A673 (cell line): ENCODE measurements at regions of chr6 and their contacts with region 1.

Region 1: DNA sequence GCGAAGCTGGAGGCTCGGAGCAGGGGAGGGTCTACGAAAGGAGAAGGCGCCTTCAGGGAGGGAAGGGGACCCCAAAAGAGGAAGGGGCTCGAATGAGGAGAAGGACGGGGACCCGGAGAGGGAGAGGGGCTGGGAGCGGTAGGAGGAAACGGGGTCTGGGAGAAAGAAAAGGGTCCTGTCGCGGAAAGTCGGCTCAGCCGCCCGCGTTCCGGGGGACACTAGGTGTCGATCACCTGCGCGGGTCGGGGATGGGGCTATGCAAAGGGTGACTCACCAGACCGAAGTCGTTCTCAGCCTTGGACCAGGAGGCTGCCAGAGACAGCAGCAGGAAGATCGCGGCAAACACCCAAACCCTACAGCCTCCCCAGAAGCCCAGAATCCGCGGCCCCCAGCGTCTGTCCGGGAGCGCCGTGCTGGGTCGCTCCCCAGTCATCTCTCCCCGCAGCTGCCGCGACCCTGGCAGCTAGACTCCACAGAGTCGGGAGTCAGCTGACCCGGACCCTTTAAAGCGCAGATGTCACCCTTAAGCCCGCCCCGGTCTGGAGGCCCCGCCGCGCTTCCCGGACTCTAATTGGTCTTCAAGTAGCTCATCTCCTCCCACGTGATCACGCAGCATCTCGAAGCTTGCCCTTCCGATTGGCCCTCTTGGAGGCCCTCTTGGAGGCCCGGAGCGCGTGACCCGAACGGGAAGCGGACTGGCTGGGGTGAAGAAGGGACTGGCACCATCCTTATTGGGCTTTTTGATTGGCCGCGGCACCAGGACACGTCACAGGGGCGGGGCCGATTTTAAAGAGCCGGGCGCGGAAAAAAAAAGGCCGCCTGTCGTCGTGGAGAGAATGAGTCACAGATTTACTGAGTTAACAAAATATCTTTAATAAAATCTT is at the start of gene NEU1:
- DNase-seq: peak; percentile 100
- H3K4me3 ChIP-seq: peak within 1 kb of the TSS; percentile 72
- H3K27ac ChIP-seq: peak within 1 kb of the TSS; percentile 81
- H3K4me1 ChIP-seq: peaks cover 6% of the 10 kb centered on the region
- H3K27me3 ChIP-seq: no peaks in the 10 kb centered on the region
- CTCF ChIP-seq: no peak
- total RNA-seq, gene NEU1: 28.5 and 34.3 TPM in 2 replicates

Region 2: DNA sequence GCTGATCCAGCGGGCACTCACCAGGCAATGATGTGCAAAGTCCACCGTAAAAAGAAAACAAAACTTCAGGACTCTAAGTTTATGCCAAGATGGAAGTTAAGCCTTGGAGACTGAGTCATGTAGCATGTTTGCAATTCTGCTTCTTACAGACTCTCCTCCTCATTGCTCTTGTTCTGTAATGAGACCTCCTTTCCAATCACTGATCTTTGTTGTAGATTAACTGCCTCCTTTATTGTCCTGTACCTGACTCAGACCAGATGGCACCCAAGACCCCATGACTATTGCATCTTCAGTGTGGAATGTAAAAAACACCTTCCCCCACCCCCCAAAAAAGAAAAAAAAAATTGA is 11.1 kb before region 1 on chr6:
- CTCF ChIA-PET with region 1: no interaction called
- POLR2A ChIA-PET with region 1: interaction called, 13 read pairs
- intact Hi-C with region 1: no loop called
- DNase-seq: no peak
- H3K4me3 ChIP-seq: no peak overlapping the region
- H3K27ac ChIP-seq: no peak overlapping the region
- H3K4me1 ChIP-seq: no peaks in the 10 kb centered on the region
- H3K27me3 ChIP-seq: no peaks in the 10 kb centered on the region
- CTCF ChIP-seq: no peak

Region 3: GRCh38 chr6:31897612-31898382 is 35.2 kb after region 1 on chr6 and contains the start of gene EHMT2:
- CTCF ChIA-PET with region 1: no interaction called
- POLR2A ChIA-PET with region 1: interaction called, 5 read pairs
- intact Hi-C with region 1: loop called (anchors 2 kb)
- DNase-seq: peak; percentile 94
- H3K4me3 ChIP-seq: peak within 1 kb of the TSS; percentile 83
- H3K27ac ChIP-seq: peak within 1 kb of the TSS; percentile 82
- H3K4me1 ChIP-seq: peaks cover 27% of the 10 kb centered on the region
- H3K27me3 ChIP-seq: no peaks in the 10 kb centered on the region
- CTCF ChIP-seq: no peak
- total RNA-seq, gene EHMT2: 117 TPM in 2 replicates